ENCODE measurements at regions of chr3 and their contacts with region 1.

Region 1: DNA sequence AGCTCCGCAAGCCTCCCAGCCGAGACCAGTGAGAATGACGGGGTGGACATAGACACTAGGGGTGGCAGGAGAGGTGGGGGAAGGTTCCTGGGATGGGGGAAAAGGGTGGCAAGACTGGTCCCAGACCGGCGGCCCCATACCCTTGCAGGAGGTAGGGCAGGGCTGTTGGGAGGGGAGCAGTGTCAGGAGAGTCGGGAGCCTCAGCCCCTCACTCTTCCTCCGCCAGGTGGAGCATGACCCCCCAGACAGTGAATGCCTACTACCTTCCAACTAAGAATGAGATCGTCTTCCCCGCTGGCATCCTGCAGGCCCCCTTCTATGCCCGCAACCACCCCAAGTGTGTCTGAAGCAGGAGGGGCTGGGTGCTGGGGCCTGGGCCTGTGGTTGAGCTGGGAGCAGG is 8.7 kb upstream of the PSMD2 start:
- DNase-seq: no peak

Region 2: DNA sequence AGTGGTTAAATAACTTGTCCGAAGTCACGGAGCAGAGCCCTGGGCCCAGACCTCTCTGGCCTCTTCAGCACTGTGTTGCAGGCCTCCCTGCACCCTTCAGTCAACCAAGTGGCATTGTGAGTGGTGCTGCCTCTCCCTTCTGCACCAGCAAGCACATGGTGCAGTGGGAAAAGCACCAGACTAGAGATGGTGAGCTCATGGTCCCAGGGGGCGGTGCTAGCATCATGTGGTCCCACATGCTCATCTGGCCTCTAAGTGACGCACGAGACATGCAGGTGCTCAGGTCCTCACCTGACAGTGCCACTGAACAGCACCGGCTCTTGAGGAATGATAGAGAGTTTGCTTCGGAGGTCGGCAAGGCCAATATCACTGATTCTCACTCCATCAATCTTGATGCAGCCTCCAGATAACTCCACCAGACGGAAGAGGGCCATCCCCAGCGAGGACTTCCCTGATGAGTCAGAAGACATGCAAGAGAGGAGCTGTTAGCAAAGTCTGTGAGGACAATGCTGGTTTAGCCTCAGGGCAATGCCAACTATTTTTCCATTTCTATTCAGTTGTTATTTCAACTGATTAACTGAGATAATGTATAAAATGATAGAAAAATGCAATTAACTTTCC is 352.6 kb before region 1 on chr3:
- intact Hi-C with region 1: no loop called
- DNase-seq: no peak

Region 3: GRCh38 chr3:184259878-184260723 is 30.2 kb before region 1 on chr3:
- intact Hi-C with region 1: loop called (anchors 5 kb)
- DNase-seq: peak in 22 of 42 donors; percentile 23 to 76 (median 55)